Posterior vena cava (tissue), 2 donors: ENCODE measurements at regions of chr2 and their contacts with region 1.

Region 1: DNA sequence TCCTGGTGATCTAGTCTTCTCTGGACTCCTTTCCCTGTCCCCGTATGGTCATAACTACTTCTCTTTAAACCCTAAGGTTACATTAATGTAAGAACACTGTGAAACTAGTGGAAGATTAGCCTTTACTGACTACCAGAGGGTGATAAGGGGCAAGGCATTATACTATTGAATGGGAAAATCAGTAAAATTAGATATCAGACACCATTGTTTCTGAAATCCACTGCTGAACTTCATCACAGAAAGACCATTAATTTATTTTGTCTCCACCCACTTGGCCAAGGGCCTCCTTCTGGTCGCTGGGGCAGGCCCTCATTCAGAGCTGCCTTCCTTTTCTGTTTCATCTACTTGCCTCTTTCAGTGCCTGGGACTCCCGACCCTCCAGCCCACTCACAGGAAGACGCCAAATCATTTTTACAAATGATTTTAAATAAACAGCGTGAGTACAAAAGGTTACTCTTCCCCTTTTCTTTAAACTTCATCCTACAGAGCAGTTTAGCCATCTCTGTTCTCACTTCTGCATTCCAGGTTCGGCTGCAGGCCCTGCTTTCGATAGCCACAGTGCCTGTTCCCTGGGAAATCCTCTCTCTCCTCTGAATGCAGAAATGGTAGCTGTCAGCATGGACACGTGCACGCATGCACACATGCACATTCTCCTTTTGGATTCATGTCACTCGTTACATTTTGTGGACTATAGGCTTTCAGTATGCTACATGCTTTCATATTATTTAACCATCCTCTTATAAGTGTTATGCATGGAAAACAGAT is 70.3 kb upstream of the DOCK10 start:
- DNase-seq: no peak

Region 2: GRCh38 chr2:224319455-224320149 is 792.9 kb before region 1 on chr2:
- intact Hi-C with region 1: no loop called
- DNase-seq: no peak

Region 3: DNA sequence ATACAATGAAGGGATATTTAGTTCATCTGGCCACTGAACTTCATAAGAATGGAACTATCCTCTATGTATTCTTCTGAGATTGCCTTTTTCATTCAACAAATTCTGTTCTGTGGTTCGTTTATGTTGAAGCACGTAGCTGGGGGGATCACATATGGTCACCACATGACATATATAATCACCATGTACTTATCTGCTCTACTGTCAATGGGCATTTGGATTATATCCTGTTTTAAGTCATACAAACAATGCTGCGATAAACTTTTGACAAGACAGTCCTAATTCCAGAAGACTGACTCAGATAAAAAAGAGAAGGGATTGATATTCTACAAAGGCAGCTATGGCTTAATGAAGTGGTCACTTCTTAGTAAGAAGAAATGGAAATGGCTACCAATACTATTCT is 280.3 kb before region 1 on chr2:
- intact Hi-C with region 1: loop called in 1 of 2 experiments (anchors 5 kb)
- DNase-seq: no peak

Region 4: GRCh38 chr2:225328160-225328559 is 215.6 kb after region 1 on chr2:
- intact Hi-C with region 1: loop called in 1 of 2 experiments (anchors 5 kb)
- DNase-seq: no peak